Activated CD4-positive, alpha-beta T cell treated with anti-CD3 and anti-CD28 coated beads for 36 hours (primary cell): ENCODE measurements at regions of chr16 and their contacts with region 1.

Region 1: GRCh38 chr16:20806168-20807050 is at the starts of genes ERI2 and REXO5:
- DNase-seq: peak; percentile 86
- ATAC-seq: peak; percentile 87
- H3K4me3 Mint-ChIP-seq: peak within 1 kb of the TSS; percentile 79
- H3K27ac Mint-ChIP-seq: peak within 1 kb of the TSS; percentile 97
- H3K4me1 Mint-ChIP-seq: peaks cover 18% of the 10 kb centered on the region
- H3K27me3 Mint-ChIP-seq: no peaks in the 10 kb centered on the region
- total RNA-seq, gene ERI2: 17.6 to 19.8 TPM
- total RNA-seq, gene REXO5: 17.9 to 20.4 TPM

Region 2: DNA sequence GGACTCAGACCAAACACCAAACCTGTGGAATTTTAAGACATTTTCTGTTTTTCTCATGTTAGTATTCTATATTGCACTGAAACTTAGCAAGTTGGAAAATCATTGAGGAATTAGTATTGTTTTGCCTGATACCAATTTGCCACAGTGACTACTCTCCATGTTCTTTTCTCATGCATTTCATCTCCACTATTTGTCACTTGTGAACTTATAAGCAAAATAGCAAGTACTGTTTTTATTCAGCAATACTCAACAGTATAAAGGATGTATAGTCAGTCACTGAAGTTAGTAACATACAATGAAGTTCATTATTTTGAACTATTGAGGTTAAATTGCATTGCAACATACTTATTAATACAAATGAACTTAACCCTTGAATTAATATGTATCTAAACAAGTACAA is 1256.7 kb before region 1 on chr16:
- CTCF ChIA-PET with region 1: no interaction called
- POLR2A ChIA-PET with region 1: no interaction called
- intact Hi-C with region 1: loop called in 1 of 2 experiments (anchors 5 kb)
- DNase-seq: no peak
- ATAC-seq: no peak
- H3K4me3 Mint-ChIP-seq: no peak overlapping the region
- H3K27ac Mint-ChIP-seq: no peak overlapping the region
- H3K4me1 Mint-ChIP-seq: peaks cover 8% of the 10 kb centered on the region
- H3K27me3 Mint-ChIP-seq: no peaks in the 10 kb centered on the region

Region 3: GRCh38 chr16:21501909-21502667 is 695.7 kb after region 1 on chr16:
- CTCF ChIA-PET with region 1: no interaction called
- POLR2A ChIA-PET with region 1: no interaction called
- intact Hi-C with region 1: loop called in 1 of 2 experiments (anchors 10 kb)
- DNase-seq: peak; percentile 97
- ATAC-seq: peak; percentile 75
- H3K4me3 Mint-ChIP-seq: peak overlapping the region; percentile 83
- H3K27ac Mint-ChIP-seq: peak overlapping the region; percentile 93
- H3K4me1 Mint-ChIP-seq: peaks cover 24% of the 10 kb centered on the region
- H3K27me3 Mint-ChIP-seq: no peaks in the 10 kb centered on the region